Activated T-helper 2 cell treated with anti-CD3 and anti-CD28 coated beads, Interferon-gamma antibody, Interleukin-2, Interleukin-4, amounts not matched to agents 10 μg/mL and 5 μg/mL and 100 μg/mL, durations not matched to agents 14 hours and 24 hours and 36 hours (primary cell): ENCODE measurements at regions of chr3 and their contacts with region 1.

Region 1: GRCh38 chr3:18559331-18559842 is 134.2 kb upstream of the SATB1 start:
- DNase-seq: peak; percentile 26
- H3K4me3 Mint-ChIP-seq: peak overlapping the region; percentile 58
- H3K27ac Mint-ChIP-seq: peak overlapping the region; percentile 96
- H3K4me1 Mint-ChIP-seq: peaks cover 71% of the 10 kb centered on the region
- H3K27me3 Mint-ChIP-seq: no peaks in the 10 kb centered on the region

Region 2: DNA sequence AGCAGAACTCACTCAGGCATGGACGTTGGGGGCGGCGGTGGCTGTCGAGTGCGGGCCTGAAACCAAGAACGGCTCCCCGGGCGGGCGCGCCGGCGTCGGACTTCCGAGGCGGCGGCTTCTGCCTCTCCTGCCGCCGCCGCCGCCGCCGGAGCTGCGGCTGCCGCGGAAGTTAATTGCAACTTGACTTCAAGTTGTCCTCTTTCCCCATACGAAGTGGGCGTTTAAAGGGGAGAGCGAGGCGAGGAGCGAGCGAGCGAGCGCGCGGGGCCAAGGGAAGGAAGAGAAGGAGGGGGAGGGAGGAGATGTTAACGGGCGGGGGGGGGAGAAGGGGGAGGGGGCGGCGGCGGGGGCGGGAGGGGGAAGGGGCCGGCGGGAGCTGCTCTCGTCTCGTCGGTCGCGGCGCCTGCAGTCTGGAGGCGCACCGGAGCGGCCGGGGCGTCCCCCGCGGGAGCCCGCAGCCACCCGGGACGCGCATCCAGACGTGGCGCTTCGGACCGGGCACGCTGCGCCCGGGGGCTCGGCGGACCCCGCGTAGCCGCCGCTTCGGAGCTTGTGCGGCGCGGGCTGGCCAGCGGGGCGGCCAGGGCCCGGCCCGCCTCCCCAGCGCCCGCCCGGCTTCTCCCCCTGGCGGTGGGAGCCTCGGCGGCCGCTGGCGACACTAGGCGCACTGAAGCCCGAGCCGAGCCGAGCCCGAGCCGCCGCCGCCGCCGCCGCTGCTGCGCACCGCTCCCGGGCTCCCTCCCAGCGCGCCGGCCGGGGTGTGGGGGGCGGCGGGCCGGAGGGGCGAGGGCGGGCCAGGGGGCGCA is 114.6 kb before region 1 on chr3:
- intact Hi-C with region 1: loop called (anchors 1 kb)
- DNase-seq: peak; percentile 77
- H3K4me3 Mint-ChIP-seq: peak overlapping the region; percentile 97
- H3K27ac Mint-ChIP-seq: peak overlapping the region; percentile 97
- H3K4me1 Mint-ChIP-seq: peaks cover 31% of the 10 kb centered on the region
- H3K27me3 Mint-ChIP-seq: no peaks in the 10 kb centered on the region

Region 3: GRCh38 chr3:18649666-18650363 is 90.4 kb after region 1 on chr3:
- intact Hi-C with region 1: loop called (anchors 1 kb)
- DNase-seq: peak; percentile 49
- H3K4me3 Mint-ChIP-seq: peak overlapping the region; percentile 14
- H3K27ac Mint-ChIP-seq: peak overlapping the region; percentile 93
- H3K4me1 Mint-ChIP-seq: peaks cover 84% of the 10 kb centered on the region
- H3K27me3 Mint-ChIP-seq: no peaks in the 10 kb centered on the region

Region 4: DNA sequence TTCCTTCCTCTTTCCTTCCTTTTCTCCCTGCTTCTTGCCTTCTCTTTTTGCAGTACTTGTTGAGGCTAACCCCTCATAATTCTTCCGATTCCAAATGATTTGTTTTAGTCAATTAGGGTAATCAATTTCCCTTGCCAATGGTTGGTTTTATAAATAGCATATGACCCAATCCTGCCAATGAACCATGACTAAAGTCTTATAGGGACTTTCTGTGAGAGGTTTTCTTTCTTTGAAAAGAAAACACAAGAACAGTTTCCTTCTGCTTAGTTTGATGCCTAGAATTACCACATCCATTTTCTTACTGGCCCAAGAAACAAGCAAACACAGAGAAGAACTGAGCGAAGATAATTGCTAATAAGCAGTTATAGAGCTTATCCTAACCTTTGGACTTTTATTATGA is 158.2 kb after region 1 on chr3:
- intact Hi-C with region 1: loop called (anchors 1 kb)
- DNase-seq: no peak
- H3K4me3 Mint-ChIP-seq: peak overlapping the region; percentile 59
- H3K27ac Mint-ChIP-seq: peak overlapping the region; percentile 98
- H3K4me1 Mint-ChIP-seq: peaks cover 67% of the 10 kb centered on the region
- H3K27me3 Mint-ChIP-seq: no peaks in the 10 kb centered on the region

Region 5: DNA sequence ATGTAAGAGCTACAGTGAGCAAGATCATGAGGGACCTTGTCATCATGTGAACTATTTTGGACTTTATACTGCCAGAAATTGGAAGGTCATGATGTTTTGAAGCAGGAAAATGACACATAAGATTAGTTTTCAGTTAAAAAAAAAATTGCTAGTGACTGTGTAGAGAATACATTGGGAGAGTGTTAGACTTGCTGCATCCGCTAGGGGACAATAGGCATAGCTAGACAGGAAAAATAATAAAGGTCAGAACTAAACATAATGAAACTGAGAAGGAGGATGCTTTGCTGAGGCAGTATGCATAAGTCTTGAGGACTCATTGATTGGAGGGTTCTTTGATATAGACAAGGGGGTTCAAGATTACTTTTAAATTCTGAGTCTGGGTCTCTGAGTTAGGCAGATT is 313.1 kb after region 1 on chr3:
- intact Hi-C with region 1: loop called (anchors 1 kb)
- DNase-seq: no peak
- H3K4me3 Mint-ChIP-seq: no peak overlapping the region
- H3K27ac Mint-ChIP-seq: no peak overlapping the region
- H3K4me1 Mint-ChIP-seq: peaks cover 43% of the 10 kb centered on the region
- H3K27me3 Mint-ChIP-seq: no peaks in the 10 kb centered on the region